Motor neuron (in vitro differentiated cells): ENCODE measurements at regions of chr1 and their contacts with region 1.

Region 1: DNA sequence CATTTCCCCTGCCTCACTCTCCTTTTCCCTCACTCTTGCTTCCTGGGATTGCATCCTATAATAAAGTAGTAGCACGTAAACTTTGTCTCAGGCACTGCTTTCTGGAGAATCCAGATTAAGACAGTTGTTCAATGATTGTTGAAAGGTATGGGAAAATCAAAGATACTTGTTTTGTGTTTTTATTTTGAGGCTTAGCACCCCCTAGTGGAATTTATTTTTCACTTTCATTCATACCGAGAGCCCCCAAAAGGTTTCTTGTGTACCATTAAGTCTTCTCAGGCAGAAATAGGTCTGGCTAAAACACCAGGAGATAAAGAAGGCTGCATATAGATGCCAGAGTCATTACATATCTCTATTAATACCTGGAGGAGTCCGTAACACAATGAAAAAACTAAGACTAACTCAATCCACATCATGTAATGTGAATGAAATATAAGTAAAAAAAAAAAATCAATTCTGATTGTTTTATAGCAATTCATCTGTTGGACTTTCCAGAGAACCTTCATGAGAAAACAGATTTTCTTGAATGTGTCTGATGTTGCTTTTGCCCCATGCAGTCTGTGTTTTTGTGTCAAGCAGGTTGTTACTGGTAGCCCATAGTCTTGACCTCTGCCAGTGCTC is 103.5 kb downstream of the RPE65 start:
- ATAC-seq: peak in 1 of 8 experiments; percentile 27
- H3K4me3 ChIP-seq: no peak overlapping the region
- H3K27ac ChIP-seq: no peak overlapping the region
- H3K4me1 ChIP-seq: no peaks in the 10 kb centered on the region

Region 2: GRCh38 chr1:68128157-68128556 is 218.1 kb before region 1 on chr1:
- in situ Hi-C with region 1: loop called in 3 of 9 experiments (anchors 25 kb)
- ATAC-seq: peak in 6 of 8 experiments; percentile 40 to 97 (median 76)
- H3K4me3 ChIP-seq: no peak overlapping the region
- H3K27ac ChIP-seq: no peak overlapping the region
- H3K4me1 ChIP-seq: peaks cover 0 to 2% of the 10 kb centered on the region in 2 donors

Region 3: DNA sequence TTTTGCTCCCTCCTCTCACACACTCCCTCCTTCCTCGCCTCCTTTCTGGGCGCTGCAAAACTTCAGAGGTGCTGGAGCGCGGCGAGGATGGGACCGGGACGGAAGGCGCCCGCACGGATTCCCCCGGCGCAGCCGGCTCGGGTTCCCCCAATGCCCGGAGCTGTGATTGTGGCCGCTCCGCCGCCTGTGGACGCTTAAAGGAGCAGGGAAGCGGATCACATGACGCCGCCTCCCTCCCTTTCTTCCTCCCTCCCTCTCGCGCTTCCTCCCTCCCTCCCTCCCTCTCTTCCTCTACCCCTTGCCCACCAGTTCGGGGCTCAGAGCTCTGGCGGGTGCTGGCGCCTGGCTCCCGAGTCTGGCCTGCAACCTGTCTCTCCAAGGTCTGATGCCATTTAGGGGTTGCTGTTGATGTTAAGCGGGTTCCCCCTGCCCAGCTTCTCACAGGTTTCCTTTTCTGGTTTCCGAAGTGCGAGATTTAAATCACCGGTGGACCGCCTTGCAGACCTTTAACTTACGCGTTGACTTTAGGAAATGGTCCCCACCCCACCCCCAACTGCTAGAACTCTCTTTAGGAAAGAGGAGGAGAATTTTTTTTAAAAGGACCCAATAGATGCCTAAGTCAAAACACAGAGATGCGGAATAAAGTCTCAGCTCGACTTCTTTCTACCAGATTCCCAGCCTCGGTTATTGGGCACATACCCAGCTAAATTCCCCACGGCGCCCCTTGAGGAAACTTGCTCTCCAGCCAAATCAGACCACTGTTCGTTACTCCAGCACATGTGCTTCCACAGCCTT is 113.7 kb before region 1 on chr1 and contains the start of gene WLS:
- in situ Hi-C with region 1: no loop called
- ATAC-seq: peak; percentile 81 to 90 (median 84)
- H3K4me3 ChIP-seq: peak within 1 kb of the TSS; percentile 39 to 71 (median 55)
- H3K27ac ChIP-seq: no peak within 1 kb of the TSS
- H3K4me1 ChIP-seq: peaks cover 14 to 18% of the 10 kb centered on the region in 2 donors
- total RNA-seq, gene WLS: 13.4 to 430 (median 75.4) TPM